BJ (cell line): ENCODE measurements at regions of chr11 and their contacts with region 1.

Region 1: GRCh38 chr11:66677599-66678375 is at the start of gene RBM4B:
- DNase-seq: peak; percentile 51
- H3K4me3 ChIP-seq: peak within 1 kb of the TSS; percentile 70
- H3K27me3 ChIP-seq: no peaks in the 10 kb centered on the region
- CTCF ChIP-seq: no peak
- polyA plus RNA-seq, gene RBM4B: 26.7 and 29.6 TPM in 2 replicates

Region 2: GRCh38 chr11:66408488-66409214 is 269.1 kb before region 1 on chr11:
- CTCF ChIA-PET with region 1: interaction called, 14 read pairs
- POLR2A ChIA-PET with region 1: no interaction called
- DNase-seq: peak; percentile 63
- H3K4me3 ChIP-seq: peak overlapping the region; percentile 54
- H3K27me3 ChIP-seq: peaks cover 13% of the 10 kb centered on the region
- CTCF ChIP-seq: peak; percentile 99

Region 3: GRCh38 chr11:66510271-66510989 is 167.4 kb before region 1 on chr11 and contains the start of gene BBS1:
- CTCF ChIA-PET with region 1: interaction called, 5 read pairs
- POLR2A ChIA-PET with region 1: interaction called, 18 read pairs
- DNase-seq: peak; percentile 3
- H3K4me3 ChIP-seq: peak within 1 kb of the TSS; percentile 80
- H3K27me3 ChIP-seq: no peaks in the 10 kb centered on the region
- CTCF ChIP-seq: peak; percentile 8; the same call in 1 of the 2 replicates
- polyA plus RNA-seq, gene BBS1: 24.0 and 31.1 TPM in 2 replicates

Region 4: GRCh38 chr11:66568124-66568916 is 109.5 kb before region 1 on chr11 and contains the start of gene CTSF:
- CTCF ChIA-PET with region 1: interaction called, 18 read pairs
- POLR2A ChIA-PET with region 1: no interaction called
- DNase-seq: no peak
- H3K4me3 ChIP-seq: peak within 1 kb of the TSS; percentile 45
- H3K27me3 ChIP-seq: no peaks in the 10 kb centered on the region
- CTCF ChIP-seq: no peak
- polyA plus RNA-seq, gene CTSF: 30.4 and 44.0 TPM in 2 replicates

Region 5: GRCh38 chr11:66579017-66579606 is 98.7 kb before region 1 on chr11:
- CTCF ChIA-PET with region 1: interaction called, 67 read pairs
- POLR2A ChIA-PET with region 1: no interaction called
- DNase-seq: no peak
- H3K4me3 ChIP-seq: no peak overlapping the region
- H3K27me3 ChIP-seq: peaks cover 2% of the 10 kb centered on the region; the same call in 1 of the 2 replicates
- CTCF ChIP-seq: peak; percentile 86

Region 6: DNA sequence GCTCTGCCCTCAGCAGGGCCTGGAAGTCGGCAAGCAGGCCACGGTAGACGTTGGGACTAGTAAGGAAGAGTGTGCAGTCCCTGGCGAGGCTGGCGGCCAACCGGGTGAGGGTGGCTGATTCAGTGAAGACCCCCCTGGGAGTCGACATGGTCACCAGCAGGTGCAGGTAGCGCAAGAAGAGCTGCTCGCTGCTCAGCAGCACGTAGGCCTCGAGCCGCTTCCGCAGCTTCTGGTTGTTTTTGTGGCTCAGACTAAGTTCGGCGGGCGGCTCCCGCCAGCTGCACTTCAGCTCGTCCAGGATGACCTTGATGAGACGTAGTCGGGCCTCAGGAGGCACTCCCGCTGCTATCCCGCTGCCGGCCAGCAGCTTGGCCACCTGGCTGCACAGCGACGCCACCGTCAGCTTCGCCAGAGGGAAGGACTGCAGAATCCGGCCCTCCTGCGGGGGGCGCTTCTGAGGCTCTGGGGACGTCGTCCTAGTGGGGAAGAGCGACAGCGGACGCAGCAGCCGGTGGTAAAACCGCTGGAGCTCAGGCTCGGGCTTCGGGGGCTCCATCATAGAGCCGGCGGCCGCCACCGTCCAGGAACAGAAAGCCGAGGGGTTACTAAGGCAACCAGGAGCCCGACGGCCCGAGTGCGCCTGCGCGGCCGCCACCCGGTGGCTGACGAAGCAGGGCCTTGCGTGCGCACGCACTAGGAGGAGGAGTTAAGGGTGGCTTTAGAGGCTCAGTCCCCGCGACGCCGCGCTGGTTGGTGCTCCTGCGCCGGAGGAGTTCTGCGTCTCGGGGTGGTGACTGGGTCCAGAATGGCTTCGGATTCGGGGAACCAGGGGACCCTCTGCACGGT is 85.1 kb before region 1 on chr11 and contains the starts of genes CCDC87 and CCS:
- CTCF ChIA-PET with region 1: interaction called, 24 read pairs
- POLR2A ChIA-PET with region 1: no interaction called
- DNase-seq: peak; percentile 62
- H3K4me3 ChIP-seq: peak within 1 kb of the TSS; percentile 68
- H3K27me3 ChIP-seq: no peaks in the 10 kb centered on the region
- CTCF ChIP-seq: peak; percentile 82
- polyA plus RNA-seq, gene CCDC87: 0.12 and 0.15 TPM in 2 replicates
- polyA plus RNA-seq, gene CCS: 23.9 and 36.4 TPM in 2 replicates

Region 7: GRCh38 chr11:66694732-66695207 is 17.0 kb after region 1 on chr11:
- CTCF ChIA-PET with region 1: interaction called, 17 read pairs
- POLR2A ChIA-PET with region 1: no interaction called
- DNase-seq: peak; percentile 84
- H3K4me3 ChIP-seq: no peak overlapping the region
- H3K27me3 ChIP-seq: no peaks in the 10 kb centered on the region
- CTCF ChIP-seq: peak; percentile 98